Cardiac septum (tissue), 1 donor: ENCODE measurements at regions of chr15 and their contacts with region 1.

Region 1: DNA sequence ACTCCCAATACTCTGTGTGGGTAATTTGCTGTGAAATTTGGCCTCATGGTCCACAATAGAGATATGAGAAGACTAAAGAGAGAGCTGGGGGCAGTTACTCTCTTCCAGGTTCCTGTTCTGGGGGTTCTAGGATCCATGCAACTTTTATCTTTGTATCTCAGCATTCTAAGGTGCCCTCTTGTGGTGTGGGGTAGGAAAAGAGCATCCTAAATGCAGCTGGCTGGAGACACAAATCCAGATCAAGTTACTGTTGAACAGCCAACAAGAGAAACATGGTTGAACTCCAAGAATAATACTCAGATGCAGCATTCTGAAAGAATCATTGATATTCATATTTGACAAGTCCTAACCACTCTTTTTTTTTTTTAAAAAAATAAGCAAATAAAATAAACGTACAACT is 238.2 kb downstream of the GREM1 start:
- DNase-seq: no peak

Region 2: GRCh38 chr15:32659340-32660155 is 296.5 kb before region 1 on chr15:
- intact Hi-C with region 1: loop called (anchors 10 kb)
- DNase-seq: no peak

Region 3: GRCh38 chr15:32763295-32763694 is 192.7 kb before region 1 on chr15:
- intact Hi-C with region 1: no loop called
- DNase-seq: no peak

Region 4: GRCh38 chr15:32861761-32862160 is 94.2 kb before region 1 on chr15:
- intact Hi-C with region 1: no loop called
- DNase-seq: no peak